BJ (cell line): ENCODE measurements at regions of chr18 and their contacts with region 1.

Region 1: GRCh38 chr18:77207540-77207939 is 42.1 kb upstream of the GALR1 start:
- DNase-seq: no peak
- H3K4me3 ChIP-seq: no peak overlapping the region
- H3K27me3 ChIP-seq: peaks cover 5% of the 10 kb centered on the region
- CTCF ChIP-seq: peak; percentile 67

Region 2: DNA sequence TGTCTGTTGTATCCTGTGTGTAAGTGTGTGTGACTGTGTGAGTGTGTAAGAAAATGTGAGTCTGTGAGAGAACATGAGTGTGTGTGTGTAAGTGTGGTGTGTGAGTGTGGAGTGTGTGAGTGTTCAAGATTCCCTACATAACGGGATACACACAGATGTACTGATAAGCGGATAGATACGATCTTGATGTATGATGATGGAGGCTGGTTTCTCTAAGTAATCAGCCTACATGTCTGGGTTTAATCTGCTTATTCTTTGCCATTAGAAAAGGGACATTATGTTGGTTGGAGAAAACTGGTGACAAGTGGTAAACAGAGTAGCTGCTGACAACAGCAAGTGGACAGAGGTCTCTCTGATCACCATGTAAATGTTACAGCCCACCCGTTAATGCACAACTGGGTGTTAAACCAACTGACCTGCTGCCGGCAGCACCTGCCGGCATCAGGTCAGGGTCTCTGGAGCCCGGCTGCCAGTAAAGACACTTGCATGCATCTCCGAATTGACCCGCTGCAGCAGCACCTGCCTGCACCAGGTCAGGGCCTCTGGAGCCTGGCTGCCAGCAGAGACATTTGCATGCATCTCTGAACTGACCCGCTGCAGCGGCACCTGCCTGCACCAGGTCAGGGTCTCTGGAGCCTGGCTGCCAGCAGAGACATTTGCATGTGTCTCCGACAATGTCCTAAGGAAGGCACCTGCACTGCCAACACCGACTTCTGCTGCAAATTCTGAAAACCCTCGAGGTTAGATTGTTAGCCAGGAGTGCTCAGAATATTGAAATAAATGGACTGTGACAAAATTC is 162.5 kb before region 1 on chr18:
- CTCF ChIA-PET with region 1: interaction called, 10 read pairs
- POLR2A ChIA-PET with region 1: no interaction called
- DNase-seq: no peak
- H3K4me3 ChIP-seq: no peak overlapping the region
- H3K27me3 ChIP-seq: peaks cover 2% of the 10 kb centered on the region; the same call in 1 of the 2 replicates
- CTCF ChIP-seq: no peak

Region 3: DNA sequence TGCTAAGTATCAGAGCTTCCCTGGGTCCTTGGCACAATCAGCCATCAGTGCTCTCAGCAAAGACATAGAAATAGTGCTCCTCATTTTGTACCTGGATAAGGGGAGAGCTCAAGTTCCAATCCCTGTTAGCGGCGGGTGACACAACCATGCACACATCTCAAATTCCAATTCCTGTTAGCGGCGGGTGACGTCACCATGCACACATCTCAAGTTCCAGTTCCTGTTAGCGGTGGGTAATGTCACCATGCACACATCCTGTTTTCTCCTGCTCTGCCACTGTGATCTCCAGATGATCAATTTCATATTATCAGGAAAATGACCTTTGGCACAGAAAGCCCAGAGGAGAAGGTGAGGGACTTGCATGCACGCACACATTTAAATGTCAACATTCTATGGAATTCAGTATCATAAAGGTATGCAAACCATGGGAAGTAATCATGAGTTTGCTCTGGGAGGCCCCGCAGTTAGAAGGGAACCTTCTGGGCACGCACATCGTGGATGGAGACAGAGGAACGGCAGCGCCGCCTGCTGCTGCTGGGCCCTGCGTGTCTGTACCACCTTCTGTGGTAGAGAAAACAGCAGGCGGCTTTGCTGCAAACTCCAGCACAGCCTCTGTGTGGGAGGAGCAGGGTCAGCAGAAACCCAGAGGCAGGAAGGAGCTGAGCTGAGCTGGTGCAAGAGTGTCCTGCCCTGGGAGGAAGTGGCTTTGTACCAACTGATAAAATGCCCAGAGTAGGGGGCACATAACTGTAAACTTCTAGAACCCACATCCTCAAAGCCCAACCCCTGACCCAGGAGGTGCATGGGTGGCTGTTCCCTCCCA is 152.7 kb before region 1 on chr18:
- CTCF ChIA-PET with region 1: interaction called, 15 read pairs
- POLR2A ChIA-PET with region 1: no interaction called
- DNase-seq: peak; percentile 31
- H3K4me3 ChIP-seq: no peak overlapping the region
- H3K27me3 ChIP-seq: no peaks in the 10 kb centered on the region; the same call in 1 of the 2 replicates
- CTCF ChIP-seq: peak; percentile 90

Region 4: GRCh38 chr18:77067291-77068061 is 140.1 kb before region 1 on chr18:
- CTCF ChIA-PET with region 1: interaction called, 21 read pairs
- POLR2A ChIA-PET with region 1: no interaction called
- DNase-seq: peak; percentile 49
- H3K4me3 ChIP-seq: no peak overlapping the region
- H3K27me3 ChIP-seq: no peaks in the 10 kb centered on the region
- CTCF ChIP-seq: 0 out of 2 replicates have a peak, but pooled peaks have one; percentile 16